A549 (cell line): ENCODE measurements at regions of chr2 and their contacts with region 1.

Region 1: DNA sequence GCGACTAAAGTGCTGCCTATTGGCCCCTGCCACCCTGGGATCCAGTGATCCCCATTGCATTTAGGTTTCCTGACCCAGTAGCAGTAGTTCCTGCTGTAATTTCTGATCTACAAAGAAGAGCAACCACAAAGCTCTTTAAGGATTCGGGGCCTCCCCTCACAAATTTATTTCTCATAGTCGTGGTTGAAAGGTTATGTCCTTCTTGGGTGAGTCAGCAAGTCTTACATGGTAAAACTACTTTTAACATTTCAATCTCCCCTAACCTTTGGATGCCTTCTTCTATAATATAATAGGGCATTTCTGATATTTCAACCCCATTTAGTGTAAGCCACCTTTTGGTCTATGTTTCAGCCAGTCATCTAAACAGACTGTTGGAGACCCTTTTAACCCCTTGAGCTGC is 14.9 kb downstream of the PIKFYVE start:
- DNase-seq: no peak
- ATAC-seq: no peak
- H3K4me3 ChIP-seq: no peak overlapping the region
- H3K27ac ChIP-seq: no peak overlapping the region
- H3K4me1 ChIP-seq: no peaks in the 10 kb centered on the region
- CTCF ChIP-seq: no peak
- EP300 ChIP-seq: no peak
- POLR2A ChIP-seq: no peak
- RAD21 ChIP-seq: no peak

Region 2: GRCh38 chr2:207819839-207820784 is 460.8 kb before region 1 on chr2:
- CTCF ChIA-PET with region 1: no interaction called
- POLR2A ChIA-PET with region 1: interaction called, 11 read pairs
- DNase-seq: peak; percentile 72 to 94
- ATAC-seq: peak; percentile 96 to 97
- H3K4me3 ChIP-seq: peak overlapping the region; percentile 19; the same call in 1 of the 3 replicates
- H3K27ac ChIP-seq: peak overlapping the region; percentile 92 to 95
- H3K4me1 ChIP-seq: peaks cover 48% of the 10 kb centered on the region
- CTCF ChIP-seq: no peak
- EP300 ChIP-seq: no peak; a peak in 1 of 5 replicates
- POLR2A ChIP-seq: no peak
- RAD21 ChIP-seq: peak in 1 of 2 experiments; percentile 40; a peak in 2 of 5 replicates

Region 3: GRCh38 chr2:208101716-208102631 is 179.0 kb before region 1 on chr2:
- CTCF ChIA-PET with region 1: no interaction called
- POLR2A ChIA-PET with region 1: no interaction called
- DNase-seq: peak in 1 of 2 experiments; percentile 45
- ATAC-seq: peak; percentile 84 to 87; a peak in 5 of 6 replicates
- H3K4me3 ChIP-seq: no peak overlapping the region
- H3K27ac ChIP-seq: no peak overlapping the region
- H3K4me1 ChIP-seq: peaks cover 5% of the 10 kb centered on the region; the same call in 1 of the 3 replicates
- CTCF ChIP-seq: peak; percentile 63
- EP300 ChIP-seq: no peak
- POLR2A ChIP-seq: no peak
- RAD21 ChIP-seq: peak; percentile 66 to 72